AG04450 (cell line): ENCODE measurements at regions of chr9 and their contacts with region 1.

Region 1: GRCh38 chr9:120936011-120936763 is 9.6 kb upstream of the TRAF1 start:
- DNase-seq: peak; percentile 90
- H3K4me3 ChIP-seq: peak overlapping the region; percentile 55
- H3K27ac ChIP-seq: peak overlapping the region; percentile 97
- H3K27me3 ChIP-seq: no peaks in the 10 kb centered on the region
- CTCF ChIP-seq: peak; percentile 96

Region 2: GRCh38 chr9:120868676-120869359 is 67.4 kb before region 1 on chr9:
- CTCF ChIA-PET with region 1: interaction called, 22 read pairs
- POLR2A ChIA-PET with region 1: no interaction called
- DNase-seq: peak; percentile 76
- H3K4me3 ChIP-seq: peak overlapping the region; percentile 65
- H3K27ac ChIP-seq: peak overlapping the region; percentile 49
- H3K27me3 ChIP-seq: no peaks in the 10 kb centered on the region
- CTCF ChIP-seq: peak; percentile 56

Region 3: GRCh38 chr9:120886490-120886967 is 49.7 kb before region 1 on chr9:
- CTCF ChIA-PET with region 1: interaction called, 10 read pairs
- POLR2A ChIA-PET with region 1: interaction called, 4 read pairs
- DNase-seq: no peak
- H3K4me3 ChIP-seq: no peak overlapping the region
- H3K27ac ChIP-seq: peak overlapping the region; percentile 52
- H3K27me3 ChIP-seq: peaks cover 8% of the 10 kb centered on the region
- CTCF ChIP-seq: no peak

Region 4: DNA sequence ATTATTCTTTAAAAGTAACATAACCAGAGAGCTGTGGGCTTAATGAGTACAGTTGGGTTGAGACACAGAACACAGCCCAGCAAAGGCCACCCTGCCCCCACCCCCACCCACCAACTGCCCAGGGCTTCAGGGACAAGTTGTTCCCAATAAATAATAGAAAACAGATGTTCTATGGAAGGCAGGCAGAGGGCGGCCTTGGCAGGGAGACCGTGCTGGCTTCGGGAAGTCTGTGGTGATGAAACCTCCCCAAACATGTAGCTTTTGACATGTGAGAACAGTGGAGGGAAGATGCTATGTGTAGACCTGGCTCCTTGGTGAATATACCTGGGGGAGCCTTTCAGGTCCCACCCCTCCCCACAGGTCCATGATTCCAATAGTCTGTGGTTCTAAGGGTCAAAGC is 19.6 kb before region 1 on chr9:
- CTCF ChIA-PET with region 1: interaction called, 11 read pairs
- POLR2A ChIA-PET with region 1: no interaction called
- DNase-seq: no peak
- H3K4me3 ChIP-seq: no peak overlapping the region
- H3K27ac ChIP-seq: no peak overlapping the region
- H3K27me3 ChIP-seq: peaks cover 2% of the 10 kb centered on the region
- CTCF ChIP-seq: 0 out of 2 replicates have a peak, but pooled peaks have one; percentile 18

Region 5: GRCh38 chr9:120925535-120926396 is 10.4 kb before region 1 on chr9:
- CTCF ChIA-PET with region 1: interaction called, 20 read pairs
- POLR2A ChIA-PET with region 1: interaction called, 3 read pairs
- DNase-seq: peak; percentile 62
- H3K4me3 ChIP-seq: peak overlapping the region; percentile 33
- H3K27ac ChIP-seq: peak overlapping the region; percentile 90
- H3K27me3 ChIP-seq: no peaks in the 10 kb centered on the region
- CTCF ChIP-seq: no peak